PC-9 (cell line): ENCODE measurements at regions of chr12 and their contacts with region 1.

Region 1: DNA sequence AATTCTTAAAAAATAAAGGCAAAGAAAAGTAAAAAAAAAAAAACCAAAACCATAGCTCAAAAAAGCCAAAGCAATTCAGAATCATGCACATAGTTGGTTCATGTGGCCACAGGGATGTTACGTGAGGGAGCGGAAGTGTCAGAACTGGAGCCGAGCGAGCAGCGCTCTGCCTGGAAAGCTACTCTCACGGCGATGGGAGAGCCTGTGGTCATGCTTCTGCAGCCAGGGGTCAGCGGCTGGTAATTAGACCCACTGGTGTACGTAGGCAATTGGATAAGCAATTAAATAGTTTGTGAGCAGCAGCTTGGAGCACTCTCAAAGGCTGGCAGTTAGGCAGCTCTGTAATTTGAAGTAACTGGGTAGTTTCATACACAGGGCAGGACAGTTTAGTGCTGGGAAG is 58.1 kb downstream of the TRHDE start:
- DNase-seq: no peak
- H3K4me3 ChIP-seq: no peak overlapping the region
- H3K27ac ChIP-seq: no peak overlapping the region
- H3K4me1 ChIP-seq: no peaks in the 10 kb centered on the region
- H3K27me3 ChIP-seq: no peaks in the 10 kb centered on the region
- CTCF ChIP-seq: no peak

Region 2: DNA sequence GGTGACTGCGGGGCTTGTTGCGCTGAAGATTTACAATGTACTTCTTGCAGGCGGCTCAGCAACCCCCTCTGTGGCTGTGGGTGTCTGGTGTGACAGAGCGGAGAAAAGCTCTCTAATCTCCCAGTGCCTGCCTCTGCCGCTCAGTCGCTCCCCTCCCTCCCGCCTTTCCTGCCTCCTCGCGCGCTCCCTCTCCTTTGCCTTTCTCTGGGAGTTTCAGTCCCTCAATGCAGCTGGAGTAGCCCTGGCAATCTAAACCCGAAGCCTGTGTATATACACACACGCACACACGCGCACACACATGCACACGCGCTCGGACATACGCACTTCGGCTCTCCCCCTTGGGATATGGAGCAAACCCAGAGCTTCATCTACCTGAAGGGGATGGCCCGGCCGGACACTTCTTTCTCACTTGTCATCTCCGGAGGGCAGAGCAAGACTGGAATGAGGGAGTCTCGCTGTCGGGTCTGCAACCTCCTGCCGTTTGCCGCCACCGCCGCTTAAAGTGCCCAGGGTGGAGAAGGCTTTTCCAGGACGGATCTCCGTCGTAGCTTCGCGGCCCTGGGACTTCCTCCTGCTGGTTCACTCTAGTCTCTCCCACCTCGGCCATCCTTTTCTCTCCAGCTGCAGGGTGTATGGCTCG is 58.7 kb before region 1 on chr12:
- CTCF ChIA-PET with region 1: interaction called, 12 read pairs
- POLR2A ChIA-PET with region 1: no interaction called
- intact Hi-C with region 1: no loop called
- DNase-seq: peak in 1 of 2 experiments; percentile 24
- H3K4me3 ChIP-seq: no peak overlapping the region
- H3K27ac ChIP-seq: no peak overlapping the region
- H3K4me1 ChIP-seq: no peaks in the 10 kb centered on the region
- H3K27me3 ChIP-seq: no peaks in the 10 kb centered on the region
- CTCF ChIP-seq: no peak

Region 3: DNA sequence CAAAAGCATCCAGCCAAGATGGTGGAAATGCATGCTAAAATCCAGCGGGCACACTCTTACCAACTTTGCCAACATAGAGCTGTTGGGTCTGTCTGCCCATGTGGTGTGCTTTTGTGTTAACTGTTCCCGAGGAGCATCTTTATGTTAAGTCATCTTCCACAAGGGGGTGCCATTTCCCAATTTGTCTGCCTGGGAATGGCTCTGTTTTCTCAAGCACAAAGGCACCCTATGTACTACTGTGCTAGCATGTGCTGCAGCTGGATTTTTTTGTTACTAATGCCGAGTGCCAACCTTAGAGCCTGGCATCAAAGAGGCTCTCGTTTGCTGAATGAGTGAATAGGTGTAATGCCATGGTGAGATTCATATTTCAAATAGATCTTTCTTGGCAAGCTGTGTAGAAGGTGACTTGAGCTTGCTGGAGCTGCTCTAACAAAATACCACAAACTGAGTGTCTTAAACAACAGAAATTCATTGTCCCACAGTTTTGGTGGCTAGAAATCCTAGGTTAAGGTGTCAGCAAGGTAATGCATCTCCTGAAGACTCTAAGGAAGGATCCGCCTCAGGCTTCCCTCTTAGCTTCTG is 16.2 kb after region 1 on chr12:
- CTCF ChIA-PET with region 1: interaction called, 15 read pairs
- POLR2A ChIA-PET with region 1: no interaction called
- intact Hi-C with region 1: no loop called
- DNase-seq: peak in 1 of 2 experiments; percentile 51
- H3K4me3 ChIP-seq: no peak overlapping the region
- H3K27ac ChIP-seq: no peak overlapping the region
- H3K4me1 ChIP-seq: no peaks in the 10 kb centered on the region
- H3K27me3 ChIP-seq: no peaks in the 10 kb centered on the region
- CTCF ChIP-seq: peak; percentile 72

Region 4: GRCh38 chr12:72717046-72717445 is 386.7 kb after region 1 on chr12:
- CTCF ChIA-PET with region 1: no interaction called
- POLR2A ChIA-PET with region 1: no interaction called
- intact Hi-C with region 1: no loop called
- DNase-seq: no peak
- H3K4me3 ChIP-seq: no peak overlapping the region
- H3K27ac ChIP-seq: no peak overlapping the region
- H3K4me1 ChIP-seq: no peaks in the 10 kb centered on the region
- H3K27me3 ChIP-seq: no peaks in the 10 kb centered on the region
- CTCF ChIP-seq: no peak

Region 5: GRCh38 chr12:73769337-73769736 is 1439.0 kb after region 1 on chr12:
- CTCF ChIA-PET with region 1: no interaction called
- POLR2A ChIA-PET with region 1: interaction called, 23 read pairs
- intact Hi-C with region 1: no loop called
- DNase-seq: no peak
- H3K4me3 ChIP-seq: no peak overlapping the region
- H3K27ac ChIP-seq: no peak overlapping the region
- H3K4me1 ChIP-seq: no peaks in the 10 kb centered on the region
- H3K27me3 ChIP-seq: no peaks in the 10 kb centered on the region
- CTCF ChIP-seq: no peak